Heart right ventricle (tissue), 16 donors: ENCODE measurements at regions of chr3 and their contacts with region 1.

Region 1: DNA sequence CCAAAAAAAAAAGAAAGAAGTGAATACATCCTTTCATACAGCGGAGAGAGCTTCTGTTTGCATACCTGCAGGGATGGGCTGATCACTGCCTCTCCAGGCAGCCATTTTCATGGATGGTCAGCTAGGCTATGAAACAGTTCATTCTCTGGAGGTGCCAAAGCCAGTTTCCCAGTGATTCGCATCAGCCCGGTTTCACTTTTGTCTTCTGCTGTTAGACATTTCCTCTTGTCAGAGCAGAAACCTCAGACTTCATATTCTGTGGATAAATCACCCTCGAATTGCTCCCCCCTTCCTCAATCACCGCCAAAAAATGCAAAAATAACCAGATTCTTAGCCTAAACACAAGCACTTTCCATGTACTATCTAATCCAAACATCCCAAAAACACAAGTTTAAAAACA is 225.6 kb downstream of the ADAMTS9 start:
- DNase-seq: no peak
- ATAC-seq: no peak
- H3K4me3 ChIP-seq: no peak overlapping the region
- H3K27ac ChIP-seq: peak overlapping the region in 1 of 10 donors; percentile 47
- H3K4me1 ChIP-seq: peaks cover 0 to 9% (median under 1%) of the 10 kb centered on the region in 9 donors
- H3K27me3 ChIP-seq: peaks cover 0 to 4% (median 0%) of the 10 kb centered on the region in 7 donors
- CTCF ChIP-seq: no peak

Region 2: GRCh38 chr3:64445321-64446300 is 16.6 kb before region 1 on chr3:
- intact Hi-C with region 1: loop called in 1 of 10 experiments (anchors 1 kb)
- DNase-seq: peak in 1 of 2 donors; percentile 34
- ATAC-seq: peak in 6 of 8 donors; percentile 26 to 72 (median 57)
- H3K4me3 ChIP-seq: peak overlapping the region in 9 of 10 donors; percentile 37 to 52 (median 46)
- H3K27ac ChIP-seq: no peak overlapping the region
- H3K4me1 ChIP-seq: peaks cover 4 to 20% (median 12%) of the 10 kb centered on the region in 9 donors
- H3K27me3 ChIP-seq: peaks cover 10 to 58% (median 51%) of the 10 kb centered on the region in 7 donors
- CTCF ChIP-seq: no peak